Motor neuron (in vitro differentiated cells): ENCODE measurements at regions of chr1 and their contacts with region 1.

Region 1: DNA sequence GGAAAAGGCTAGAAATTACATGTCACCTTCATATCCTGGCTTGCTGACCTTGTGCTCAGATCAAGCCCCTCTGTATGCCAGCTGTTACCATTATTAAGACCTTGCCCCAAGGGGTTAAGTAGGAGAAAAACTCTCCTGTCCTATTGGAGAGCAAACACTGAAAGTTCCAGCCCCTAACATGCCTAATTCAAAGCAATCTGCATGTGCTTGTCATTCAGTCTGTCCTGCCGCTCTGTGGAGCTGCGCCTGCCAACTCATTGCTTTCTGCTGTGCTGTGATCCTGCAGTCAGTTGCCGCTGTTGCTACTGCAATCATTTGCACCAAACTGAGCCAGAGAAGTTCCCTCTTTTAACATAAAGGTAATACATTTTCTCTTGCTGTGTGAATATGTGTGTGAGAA is 113.4 kb downstream of the DISP1 start:
- ATAC-seq: peak; percentile 88 to 100 (median 94)
- H3K4me3 ChIP-seq: no peak overlapping the region
- H3K27ac ChIP-seq: no peak overlapping the region
- H3K4me1 ChIP-seq: peaks cover 3 to 11% of the 10 kb centered on the region in 2 donors

Region 2: GRCh38 chr1:222606757-222607156 is 321.5 kb before region 1 on chr1:
- in situ Hi-C with region 1: no loop called
- ATAC-seq: no peak
- H3K4me3 ChIP-seq: no peak overlapping the region
- H3K27ac ChIP-seq: no peak overlapping the region
- H3K4me1 ChIP-seq: no peaks in the 10 kb centered on the region

Region 3: GRCh38 chr1:223102797-223103533 is 174.8 kb after region 1 on chr1:
- in situ Hi-C with region 1: loop called in 1 of 9 experiments (anchors 25 kb)
- ATAC-seq: peak in 2 of 8 experiments; percentile 20 to 31
- H3K4me3 ChIP-seq: no peak overlapping the region
- H3K27ac ChIP-seq: no peak overlapping the region
- H3K4me1 ChIP-seq: peaks cover 0 to 4% of the 10 kb centered on the region in 2 donors